ENCODE measurements at regions of chr1 and their contacts with region 1.

Region 1: GRCh38 chr1:154936555-154937084 is at the start of gene PMVK:
- DNase-seq: peak; percentile 96
- H3K4me3 Mint-ChIP-seq: peak within 1 kb of the TSS; percentile 90
- H3K27ac Mint-ChIP-seq: peak within 1 kb of the TSS; percentile 96
- H3K4me1 Mint-ChIP-seq: peaks cover 55% of the 10 kb centered on the region
- H3K27me3 Mint-ChIP-seq: no peaks in the 10 kb centered on the region
- total RNA-seq, gene PMVK: 51.2 to 54.0 TPM

Region 2: DNA sequence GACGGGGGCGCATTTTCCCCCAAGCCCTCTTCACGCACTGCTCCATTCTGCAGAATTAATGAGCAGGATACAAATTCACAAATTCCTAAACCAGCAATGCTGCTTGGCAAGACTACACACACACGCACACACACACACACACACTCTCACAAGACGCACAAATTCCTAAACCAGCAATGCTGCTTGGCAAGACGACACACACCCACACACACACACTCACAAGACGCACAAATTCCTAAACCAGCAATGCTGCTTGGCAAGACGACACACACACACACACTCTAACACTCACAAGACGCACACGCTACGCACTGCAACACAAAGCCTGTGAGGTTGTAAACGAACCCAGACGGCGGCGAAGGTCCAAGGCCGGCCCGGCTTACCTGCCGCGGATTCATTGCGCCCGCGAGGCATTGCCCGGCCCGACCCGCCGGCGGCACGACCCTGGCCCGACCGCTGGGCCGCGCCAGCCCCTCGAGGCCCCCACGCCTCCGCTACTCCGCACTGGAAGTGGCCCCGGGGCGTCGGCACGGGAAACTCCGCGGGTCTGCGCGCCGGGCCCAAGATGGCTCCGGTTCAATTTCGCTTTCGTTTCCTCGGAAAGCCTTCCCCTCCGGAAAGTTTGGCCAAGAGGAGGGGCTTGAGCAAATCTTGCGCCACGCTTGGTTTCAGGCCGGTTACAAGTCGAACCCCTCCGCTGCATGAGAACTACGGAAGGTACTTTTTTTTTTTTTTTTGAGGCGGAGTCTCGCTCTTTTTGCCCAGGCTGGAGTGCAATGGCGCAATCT is 328.8 kb before region 1 on chr1 and contains the start of gene ADAR:
- CTCF ChIA-PET with region 1: no interaction called
- POLR2A ChIA-PET with region 1: interaction called, 4 read pairs
- intact Hi-C with region 1: loop called (anchors 2 kb)
- DNase-seq: peak; percentile 96
- H3K4me3 Mint-ChIP-seq: peak within 1 kb of the TSS; percentile 90
- H3K27ac Mint-ChIP-seq: peak within 1 kb of the TSS; percentile 98
- H3K4me1 Mint-ChIP-seq: peaks cover 71% of the 10 kb centered on the region
- H3K27me3 Mint-ChIP-seq: no peaks in the 10 kb centered on the region
- total RNA-seq, gene ADAR: 270 to 289 TPM

Region 3: GRCh38 chr1:154784924-154785531 is 151.6 kb before region 1 on chr1:
- CTCF ChIA-PET with region 1: no interaction called
- POLR2A ChIA-PET with region 1: no interaction called
- intact Hi-C with region 1: loop called (anchors 2 kb)
- DNase-seq: peak; percentile 78
- H3K4me3 Mint-ChIP-seq: peak overlapping the region; percentile 49
- H3K27ac Mint-ChIP-seq: peak overlapping the region; percentile 86
- H3K4me1 Mint-ChIP-seq: peaks cover 31% of the 10 kb centered on the region
- H3K27me3 Mint-ChIP-seq: no peaks in the 10 kb centered on the region

Region 4: GRCh38 chr1:154837672-154838171 is 98.9 kb before region 1 on chr1:
- CTCF ChIA-PET with region 1: no interaction called
- POLR2A ChIA-PET with region 1: no interaction called
- intact Hi-C with region 1: no loop called
- DNase-seq: no peak
- H3K4me3 Mint-ChIP-seq: no peak overlapping the region
- H3K27ac Mint-ChIP-seq: no peak overlapping the region
- H3K4me1 Mint-ChIP-seq: no peaks in the 10 kb centered on the region
- H3K27me3 Mint-ChIP-seq: peaks cover 1% of the 10 kb centered on the region

Region 5: DNA sequence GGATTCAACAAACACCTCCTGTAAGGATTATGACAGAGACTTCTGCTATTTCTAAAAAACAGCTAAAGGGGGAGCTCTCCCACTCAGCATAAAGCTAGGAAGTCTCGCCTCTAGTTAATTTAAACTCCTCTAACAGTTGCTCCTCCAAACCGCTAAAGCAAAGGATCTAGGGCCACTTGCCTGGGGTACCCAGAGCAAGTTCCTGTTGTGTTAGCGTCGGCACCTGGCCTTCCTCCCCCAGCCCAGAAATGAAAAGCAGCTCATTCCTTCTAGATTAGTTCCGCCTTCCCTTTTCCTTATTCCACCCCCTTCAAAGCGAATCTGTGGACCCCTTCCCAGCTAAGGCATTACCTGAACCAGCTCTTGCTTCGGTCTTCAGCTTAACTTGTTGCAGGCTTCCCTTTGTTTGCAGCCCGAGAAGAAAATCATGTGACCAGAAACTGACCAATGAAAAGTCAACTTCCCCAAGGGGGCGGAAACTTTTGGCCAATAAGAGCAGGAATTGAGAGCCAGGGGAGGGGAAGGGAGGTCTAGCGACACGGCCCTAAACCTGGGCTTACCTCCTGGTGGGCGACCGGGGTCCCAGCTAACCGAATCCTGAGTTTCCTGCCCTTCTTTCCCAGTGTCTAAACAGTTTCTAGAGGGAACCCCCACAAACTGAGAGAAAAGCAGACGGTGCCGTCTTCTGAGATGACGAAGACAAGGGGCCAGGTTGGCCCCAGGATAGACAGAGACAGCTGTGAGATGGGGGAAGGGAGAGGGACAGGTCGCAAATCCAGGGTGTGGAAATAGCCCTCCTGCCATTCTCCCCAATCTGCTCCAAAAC is 19.3 kb after region 1 on chr1 and contains the start of gene PBXIP1:
- CTCF ChIA-PET with region 1: interaction called, 16 read pairs
- POLR2A ChIA-PET with region 1: interaction called, 20 read pairs
- intact Hi-C with region 1: loop called (anchors 1 kb)
- DNase-seq: peak; percentile 89
- H3K4me3 Mint-ChIP-seq: peak within 1 kb of the TSS; percentile 92
- H3K27ac Mint-ChIP-seq: peak within 1 kb of the TSS; percentile 97
- H3K4me1 Mint-ChIP-seq: peaks cover 75% of the 10 kb centered on the region
- H3K27me3 Mint-ChIP-seq: no peaks in the 10 kb centered on the region
- total RNA-seq, gene PBXIP1: 55.9 to 57.3 TPM

Region 6: GRCh38 chr1:154974063-154974807 is 37.6 kb after region 1 on chr1 and contains the start of gene CKS1B:
- CTCF ChIA-PET with region 1: no interaction called
- POLR2A ChIA-PET with region 1: interaction called, 10 read pairs
- intact Hi-C with region 1: loop called (anchors 1 kb)
- DNase-seq: peak; percentile 98
- H3K4me3 Mint-ChIP-seq: no peak within 1 kb of the TSS
- H3K27ac Mint-ChIP-seq: no peak within 1 kb of the TSS
- H3K4me1 Mint-ChIP-seq: peaks cover 30% of the 10 kb centered on the region
- H3K27me3 Mint-ChIP-seq: no peaks in the 10 kb centered on the region
- total RNA-seq, gene CKS1B: 197 to 205 TPM

Region 7: DNA sequence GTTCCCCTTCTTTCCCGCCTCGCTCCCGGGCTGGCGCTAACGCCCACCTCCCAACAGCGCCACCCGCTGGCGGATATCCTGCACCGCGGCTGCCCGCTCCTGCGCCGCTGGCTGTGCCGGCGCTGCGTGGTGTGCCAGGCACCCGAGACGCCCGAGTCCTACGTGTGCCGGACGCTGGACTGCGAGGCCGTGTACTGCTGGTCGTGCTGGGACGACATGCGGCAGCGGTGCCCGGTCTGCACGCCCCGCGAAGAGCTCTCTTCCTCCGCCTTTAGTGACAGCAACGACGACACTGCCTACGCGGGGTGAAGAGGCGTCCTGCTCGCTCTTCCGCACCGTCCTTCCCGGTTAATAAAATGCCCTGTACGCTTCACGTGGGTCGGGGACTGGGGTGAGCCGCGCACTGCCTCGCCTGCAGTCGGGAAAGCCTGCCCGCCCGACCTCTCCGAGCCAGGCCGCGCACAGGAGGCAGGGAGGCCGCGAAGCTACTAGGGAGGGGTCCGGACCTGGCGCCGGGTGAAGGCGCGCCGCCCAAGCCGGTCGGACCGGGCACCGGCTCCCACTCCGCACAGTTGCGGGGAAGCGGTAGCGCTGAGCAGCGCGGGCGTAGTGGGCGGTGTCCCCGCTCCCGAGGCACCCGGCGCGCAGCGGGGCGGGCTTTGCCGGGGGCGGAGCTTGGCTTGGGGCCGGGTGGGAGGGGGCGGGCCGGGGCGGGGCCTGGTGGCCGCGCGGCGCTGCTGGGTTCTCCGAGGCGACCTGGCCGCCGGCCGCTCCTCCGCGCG is 114.1 kb after region 1 on chr1 and contains the start of gene ADAM15:
- CTCF ChIA-PET with region 1: interaction called, 12 read pairs
- POLR2A ChIA-PET with region 1: interaction called, 4 read pairs
- intact Hi-C with region 1: no loop called
- DNase-seq: peak; percentile 87
- H3K4me3 Mint-ChIP-seq: peak within 1 kb of the TSS; percentile 81
- H3K27ac Mint-ChIP-seq: peak within 1 kb of the TSS; percentile 64
- H3K4me1 Mint-ChIP-seq: peaks cover 22% of the 10 kb centered on the region
- H3K27me3 Mint-ChIP-seq: no peaks in the 10 kb centered on the region
- total RNA-seq, gene ADAM15: 54.3 to 60.5 TPM

Measured in activated CD4-positive, alpha-beta memory T cell treated with anti-CD3 and anti-CD28 coated beads for 36 hours (primary cell).